ENCODE measurements at regions of chr21 and their contacts with region 1.

Region 1: GRCh38 chr21:33655591-33656221 is 13.4 kb downstream of the ITSN1 start:
- DNase-seq: peak; percentile 63 to 96
- H3K4me3 ChIP-seq: no peak overlapping the region; the same call in 1 of the 2 replicates
- H3K27ac ChIP-seq: peak overlapping the region; percentile 73
- H3K4me1 ChIP-seq: peaks cover 14% of the 10 kb centered on the region
- H3K27me3 ChIP-seq: no peaks in the 10 kb centered on the region
- CTCF ChIP-seq: no peak

Region 2: GRCh38 chr21:33682992-33683627 is 27.4 kb after region 1 on chr21:
- CTCF ChIA-PET with region 1: no interaction called
- POLR2A ChIA-PET with region 1: interaction called, 8 read pairs
- intact Hi-C with region 1: loop called (anchors 1 kb)
- DNase-seq: peak; percentile 61 to 96
- H3K4me3 ChIP-seq: peak overlapping the region; percentile 14; the same call in 1 of the 2 replicates
- H3K27ac ChIP-seq: peak overlapping the region; percentile 85
- H3K4me1 ChIP-seq: peaks cover 64% of the 10 kb centered on the region
- H3K27me3 ChIP-seq: no peaks in the 10 kb centered on the region
- CTCF ChIP-seq: no peak

Region 3: GRCh38 chr21:33801424-33802420 is 146.0 kb after region 1 on chr21:
- CTCF ChIA-PET with region 1: no interaction called
- POLR2A ChIA-PET with region 1: no interaction called
- intact Hi-C with region 1: loop called (anchors 1 kb)
- DNase-seq: peak; percentile 72 to 96
- H3K4me3 ChIP-seq: peak overlapping the region; percentile 22; the same call in 1 of the 2 replicates
- H3K27ac ChIP-seq: peak overlapping the region; percentile 79
- H3K4me1 ChIP-seq: peaks cover 41% of the 10 kb centered on the region
- H3K27me3 ChIP-seq: no peaks in the 10 kb centered on the region
- CTCF ChIP-seq: no peak